WTC11 (cell line): ENCODE measurements at regions of chr14 and their contacts with region 1.

Region 1: GRCh38 chr14:58166005-58166983 is 14.3 kb upstream of the ARMH4 start:
- DNase-seq: peak; percentile 92
- ATAC-seq: peak; percentile 73
- H3K4me3 Mint-ChIP-seq: no peak overlapping the region
- H3K27ac Mint-ChIP-seq: no peak overlapping the region
- H3K4me1 Mint-ChIP-seq: peaks cover 13% of the 10 kb centered on the region
- H3K27me3 Mint-ChIP-seq: no peaks in the 10 kb centered on the region
- CTCF ChIP-seq: peak; percentile 85

Region 2: DNA sequence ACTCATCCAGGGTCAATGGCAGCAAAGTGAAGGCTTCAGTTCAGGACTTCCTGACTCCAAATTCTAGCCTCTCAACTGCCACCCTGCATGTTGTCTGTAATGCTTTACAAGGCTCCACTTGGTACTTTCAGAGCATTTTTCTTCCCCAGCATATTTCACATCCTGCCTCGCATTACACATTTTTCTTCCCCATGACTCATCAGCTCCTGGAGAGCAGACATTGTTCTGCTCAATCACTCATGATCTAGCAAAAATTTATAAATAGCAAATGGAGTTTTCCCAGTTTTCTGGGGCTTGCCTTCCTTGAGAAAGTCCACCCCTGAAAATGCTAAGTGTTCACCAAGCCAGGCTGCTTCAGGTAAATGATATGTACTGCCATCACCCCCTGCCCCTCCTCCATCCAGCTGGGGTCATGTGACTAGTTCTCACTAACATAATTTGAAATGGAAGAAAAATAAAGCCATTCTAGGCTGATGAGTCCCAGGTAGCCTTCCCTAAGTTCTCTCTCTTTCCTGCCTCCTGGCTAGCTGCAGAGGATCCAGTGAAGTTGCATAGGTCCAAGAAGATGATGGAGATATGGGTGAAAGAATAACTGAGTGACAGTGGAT is 83.7 kb before region 1 on chr14:
- CTCF ChIA-PET with region 1: no interaction called
- POLR2A ChIA-PET with region 1: no interaction called
- DNase-seq: no peak
- ATAC-seq: peak; percentile 25; the same call in 1 of the 2 replicates
- H3K4me3 Mint-ChIP-seq: no peak overlapping the region
- H3K27ac Mint-ChIP-seq: peak overlapping the region; percentile 29; the same call in 1 of the 2 replicates
- H3K4me1 Mint-ChIP-seq: peaks cover 17% of the 10 kb centered on the region
- H3K27me3 Mint-ChIP-seq: no peaks in the 10 kb centered on the region
- CTCF ChIP-seq: no peak

Region 3: GRCh38 chr14:58107947-58108552 is 58.2 kb before region 1 on chr14:
- CTCF ChIA-PET with region 1: interaction called, 12 read pairs
- POLR2A ChIA-PET with region 1: no interaction called
- DNase-seq: peak; percentile 19
- ATAC-seq: peak; percentile 52; the same call in 1 of the 2 replicates
- H3K4me3 Mint-ChIP-seq: no peak overlapping the region
- H3K27ac Mint-ChIP-seq: no peak overlapping the region
- H3K4me1 Mint-ChIP-seq: no peaks in the 10 kb centered on the region
- H3K27me3 Mint-ChIP-seq: no peaks in the 10 kb centered on the region; the same call in 1 of the 2 replicates
- CTCF ChIP-seq: no peak

Region 4: DNA sequence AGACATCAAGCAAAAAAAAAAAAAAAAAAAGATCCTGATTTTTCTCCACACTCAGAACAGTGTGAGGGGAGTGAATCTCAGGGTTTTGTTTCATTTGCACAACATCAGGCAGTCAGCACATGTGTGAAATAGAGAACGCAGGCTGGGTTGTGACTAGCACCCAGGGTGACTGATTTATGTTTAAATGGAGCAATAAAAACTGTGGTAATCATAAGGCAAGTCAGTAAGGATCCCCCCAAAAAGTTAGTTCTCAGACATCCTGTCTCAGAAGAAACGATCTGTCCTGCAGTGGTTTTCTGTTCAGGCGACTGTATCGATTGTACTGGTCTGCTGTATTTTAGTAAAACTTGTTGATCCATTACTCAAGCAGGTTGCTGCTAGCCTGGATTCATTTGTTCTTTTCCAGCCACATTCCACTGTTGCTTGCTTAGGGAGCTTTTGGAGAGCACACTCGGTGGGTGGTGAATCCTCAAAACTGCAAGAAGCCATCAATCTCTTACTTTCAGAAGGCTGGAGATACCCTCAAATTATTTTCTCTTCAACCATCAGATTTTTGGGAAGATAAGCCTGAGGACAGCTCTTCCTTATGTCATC is 578.6 kb after region 1 on chr14:
- CTCF ChIA-PET with region 1: no interaction called
- POLR2A ChIA-PET with region 1: interaction called, 10 read pairs
- DNase-seq: no peak
- ATAC-seq: no peak
- H3K4me3 Mint-ChIP-seq: no peak overlapping the region
- H3K27ac Mint-ChIP-seq: no peak overlapping the region
- H3K4me1 Mint-ChIP-seq: no peaks in the 10 kb centered on the region
- H3K27me3 Mint-ChIP-seq: no peaks in the 10 kb centered on the region
- CTCF ChIP-seq: no peak